PC-9 (cell line): ENCODE measurements at regions of chr17 and their contacts with region 1.

Region 1: GRCh38 chr17:17326275-17326875 is 23.2 kb downstream of the NT5M start:
- DNase-seq: no peak
- H3K4me3 ChIP-seq: no peak overlapping the region
- H3K27ac ChIP-seq: no peak overlapping the region
- H3K4me1 ChIP-seq: no peaks in the 10 kb centered on the region
- H3K27me3 ChIP-seq: no peaks in the 10 kb centered on the region
- CTCF ChIP-seq: no peak

Region 2: DNA sequence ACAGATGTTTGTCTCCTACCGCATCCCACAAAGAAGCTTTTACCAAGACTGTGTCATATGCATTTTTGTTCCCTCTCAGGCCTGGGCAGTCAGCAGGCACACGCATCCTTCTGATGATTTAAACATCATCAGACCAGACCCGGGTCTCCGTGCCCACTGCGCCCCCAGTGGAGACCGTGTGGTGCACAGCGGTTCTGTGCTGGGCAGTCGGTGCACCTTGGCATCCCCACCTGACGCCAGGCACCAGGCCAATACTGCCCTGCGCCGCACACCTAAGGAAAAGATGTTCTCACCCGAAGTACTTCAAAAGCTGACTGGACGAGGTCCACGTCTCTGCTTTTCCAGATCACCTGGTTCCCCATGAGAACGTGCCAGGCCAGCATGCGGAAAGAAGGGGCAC is 109.6 kb before region 1 on chr17:
- CTCF ChIA-PET with region 1: no interaction called
- POLR2A ChIA-PET with region 1: no interaction called
- intact Hi-C with region 1: no loop called
- DNase-seq: no peak
- H3K4me3 ChIP-seq: no peak overlapping the region
- H3K27ac ChIP-seq: no peak overlapping the region
- H3K4me1 ChIP-seq: no peaks in the 10 kb centered on the region
- H3K27me3 ChIP-seq: no peaks in the 10 kb centered on the region
- CTCF ChIP-seq: no peak

Region 3: GRCh38 chr17:17376362-17376761 is 50.0 kb after region 1 on chr17:
- CTCF ChIA-PET with region 1: no interaction called
- POLR2A ChIA-PET with region 1: no interaction called
- intact Hi-C with region 1: no loop called
- DNase-seq: no peak
- H3K4me3 ChIP-seq: no peak overlapping the region
- H3K27ac ChIP-seq: no peak overlapping the region
- H3K4me1 ChIP-seq: no peaks in the 10 kb centered on the region
- H3K27me3 ChIP-seq: peaks cover 59% of the 10 kb centered on the region
- CTCF ChIP-seq: no peak

Region 4: DNA sequence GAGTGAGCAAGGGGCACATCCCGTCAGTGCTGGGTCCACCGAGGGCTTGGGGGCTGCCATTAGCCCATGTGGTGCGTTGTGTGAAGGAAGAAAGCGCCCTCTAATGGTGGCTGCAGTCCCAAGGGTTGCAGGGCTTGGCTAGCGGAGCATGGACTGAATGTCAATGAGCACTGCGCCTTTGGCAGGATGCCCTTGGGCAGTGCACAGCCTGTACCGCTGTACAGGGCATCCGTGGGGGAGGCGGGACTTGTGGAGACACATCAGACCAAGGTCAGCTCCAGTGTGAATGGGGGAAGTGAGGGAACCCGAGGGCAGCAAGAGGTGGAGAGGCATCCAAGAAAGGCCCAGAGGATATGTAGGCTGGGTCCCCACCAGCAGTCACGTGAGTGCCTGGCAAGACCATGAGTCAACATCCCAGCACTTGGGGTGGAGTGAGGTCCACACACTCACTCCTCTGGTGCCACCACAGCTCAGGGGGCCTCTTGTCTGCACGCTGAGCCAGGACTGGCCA is 75.0 kb after region 1 on chr17:
- CTCF ChIA-PET with region 1: interaction called, 12 read pairs
- POLR2A ChIA-PET with region 1: no interaction called
- intact Hi-C with region 1: no loop called
- DNase-seq: peak in 1 of 2 experiments; percentile 8
- H3K4me3 ChIP-seq: no peak overlapping the region
- H3K27ac ChIP-seq: no peak overlapping the region
- H3K4me1 ChIP-seq: no peaks in the 10 kb centered on the region
- H3K27me3 ChIP-seq: peaks cover 62% of the 10 kb centered on the region
- CTCF ChIP-seq: peak; percentile 35; the same call in 1 of the 2 replicates

Region 5: GRCh38 chr17:17663160-17664063 is 337.0 kb after region 1 on chr17:
- CTCF ChIA-PET with region 1: no interaction called
- POLR2A ChIA-PET with region 1: no interaction called
- intact Hi-C with region 1: no loop called
- DNase-seq: peak in 1 of 2 experiments; percentile 57
- H3K4me3 ChIP-seq: no peak overlapping the region
- H3K27ac ChIP-seq: no peak overlapping the region
- H3K4me1 ChIP-seq: peaks cover 7% of the 10 kb centered on the region
- H3K27me3 ChIP-seq: no peaks in the 10 kb centered on the region; the same call in 1 of the 2 replicates
- CTCF ChIP-seq: no peak

Region 6: DNA sequence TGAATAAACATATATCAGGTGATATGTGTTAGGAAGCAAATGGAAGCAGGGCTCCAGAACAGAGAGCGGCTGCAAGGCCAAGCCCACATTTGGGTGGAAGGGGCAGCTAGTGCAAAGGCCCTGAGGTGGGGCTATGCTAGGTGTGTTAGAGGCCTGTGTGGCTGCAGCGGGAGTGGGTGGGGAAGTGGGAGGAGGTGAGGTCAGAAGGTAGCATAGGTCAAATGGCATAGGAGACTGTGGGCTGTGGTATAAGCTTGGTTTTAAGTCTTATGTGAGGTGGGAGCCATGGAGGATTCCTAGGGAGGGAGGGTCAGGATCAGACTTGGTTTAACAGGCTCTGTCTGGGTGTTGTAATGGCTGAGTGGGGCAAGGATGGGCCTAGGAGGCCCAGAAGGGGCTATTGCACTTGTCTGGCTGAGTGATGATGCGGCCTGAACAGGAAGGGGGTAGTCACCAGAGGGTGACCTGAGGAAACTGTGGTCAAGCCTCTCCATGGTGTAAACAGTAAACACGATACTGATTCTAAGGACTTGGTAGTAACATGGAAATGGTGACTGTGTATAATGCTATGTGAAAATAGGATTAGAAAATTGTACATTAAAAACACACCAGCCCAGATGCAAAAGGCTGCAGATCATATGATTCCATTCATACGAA is 386.0 kb after region 1 on chr17:
- CTCF ChIA-PET with region 1: no interaction called
- POLR2A ChIA-PET with region 1: no interaction called
- intact Hi-C with region 1: no loop called
- DNase-seq: peak; percentile 49 to 79
- H3K4me3 ChIP-seq: no peak overlapping the region
- H3K27ac ChIP-seq: peak overlapping the region; percentile 80
- H3K4me1 ChIP-seq: peaks cover 40% of the 10 kb centered on the region
- H3K27me3 ChIP-seq: no peaks in the 10 kb centered on the region
- CTCF ChIP-seq: no peak